ENCODE measurements at regions of chr9 and their contacts with region 1.

Region 1: DNA sequence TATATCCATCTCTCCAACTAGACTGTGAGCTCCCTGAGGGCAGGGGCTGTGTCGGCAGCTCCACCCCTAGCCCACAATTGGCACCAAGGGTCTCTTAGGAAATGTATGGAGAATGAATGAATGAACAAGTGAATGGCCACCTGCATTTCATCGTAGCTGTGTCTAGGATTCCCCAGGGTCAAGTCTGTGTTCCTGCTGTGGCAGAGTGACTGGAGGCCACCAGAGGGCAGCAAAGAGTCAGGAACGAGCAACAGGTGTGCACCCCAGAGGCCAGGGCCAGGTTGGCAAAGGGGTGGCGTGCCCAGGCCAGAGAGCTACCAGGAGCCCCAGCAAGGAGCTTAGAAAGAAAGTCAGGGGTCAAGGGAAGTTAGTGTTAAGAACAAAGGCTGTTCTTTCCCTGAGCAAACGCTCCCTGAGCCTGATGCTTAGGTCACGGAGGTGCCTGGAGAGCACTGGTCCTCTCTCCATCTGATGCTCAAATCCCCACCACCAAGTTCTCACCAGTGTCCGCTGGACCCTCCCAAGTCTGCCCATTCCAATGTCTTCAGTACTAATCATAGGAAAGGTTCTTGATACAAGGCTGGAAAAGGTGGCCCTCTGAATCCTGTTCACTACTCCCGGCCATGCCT is 160.7 kb downstream of the PAX5 start:
- DNase-seq: peak; percentile 73 to 83
- ATAC-seq: peak; percentile 81 to 97
- H3K4me3 ChIP-seq: no peak overlapping the region
- H3K27ac ChIP-seq: no peak overlapping the region
- H3K4me1 ChIP-seq: no peaks in the 10 kb centered on the region
- CTCF ChIP-seq: peak; percentile 90
- EP300 ChIP-seq: no peak
- POLR2A ChIP-seq: no peak
- RAD21 ChIP-seq: peak; percentile 97 to 98

Region 2: DNA sequence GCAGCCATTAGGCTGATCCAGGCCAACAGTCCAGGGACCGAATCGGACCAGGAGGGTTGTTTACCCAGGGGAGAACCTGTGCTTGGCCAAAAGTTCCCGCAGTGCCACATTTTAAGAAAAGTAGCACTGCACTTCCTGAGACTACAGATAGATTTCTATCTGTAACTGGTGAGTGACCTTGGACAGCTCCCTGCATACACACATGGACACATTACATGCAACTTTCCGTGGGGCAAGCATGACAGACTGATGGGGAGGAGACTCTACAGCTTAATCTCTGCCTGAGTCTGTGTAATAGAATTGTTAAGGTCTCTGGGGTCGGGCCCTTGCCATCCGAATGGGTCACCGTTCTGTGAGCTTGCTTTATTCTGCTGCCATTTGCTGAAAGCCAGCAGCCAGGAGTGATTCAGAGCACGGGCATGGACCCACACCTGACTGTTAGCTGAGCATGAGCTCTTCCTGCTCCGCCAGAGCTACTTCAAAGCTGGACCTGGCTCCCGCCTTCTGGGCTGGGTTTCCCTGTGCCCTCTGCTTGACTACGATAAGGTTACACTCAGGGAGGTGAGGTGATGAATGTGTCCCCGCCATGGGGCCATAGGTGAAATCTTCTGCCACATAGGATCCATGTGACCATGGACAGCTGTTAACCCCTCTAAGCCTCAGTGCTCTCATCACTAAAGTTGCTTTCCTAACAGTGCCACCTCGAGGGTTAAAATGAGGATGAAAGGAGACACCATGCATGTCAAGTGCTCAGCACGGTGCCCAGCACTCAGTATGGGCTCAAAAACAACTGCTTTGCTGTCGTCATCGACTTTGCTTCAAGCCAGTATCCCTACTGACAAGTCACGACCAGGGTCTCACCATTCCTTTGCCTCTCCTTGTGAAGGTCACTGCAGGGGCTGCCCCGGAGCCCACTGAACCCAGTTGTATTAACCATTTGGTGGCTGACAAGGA is 100.6 kb before region 1 on chr9:
- CTCF ChIA-PET with region 1: no interaction called
- POLR2A ChIA-PET with region 1: no interaction called
- DNase-seq: no peak
- ATAC-seq: peak; percentile 46 to 66; a peak in 5 of 6 replicates
- H3K4me3 ChIP-seq: no peak overlapping the region
- H3K27ac ChIP-seq: no peak overlapping the region
- H3K4me1 ChIP-seq: no peaks in the 10 kb centered on the region
- CTCF ChIP-seq: no peak
- EP300 ChIP-seq: no peak
- POLR2A ChIP-seq: no peak
- RAD21 ChIP-seq: no peak

Region 3: DNA sequence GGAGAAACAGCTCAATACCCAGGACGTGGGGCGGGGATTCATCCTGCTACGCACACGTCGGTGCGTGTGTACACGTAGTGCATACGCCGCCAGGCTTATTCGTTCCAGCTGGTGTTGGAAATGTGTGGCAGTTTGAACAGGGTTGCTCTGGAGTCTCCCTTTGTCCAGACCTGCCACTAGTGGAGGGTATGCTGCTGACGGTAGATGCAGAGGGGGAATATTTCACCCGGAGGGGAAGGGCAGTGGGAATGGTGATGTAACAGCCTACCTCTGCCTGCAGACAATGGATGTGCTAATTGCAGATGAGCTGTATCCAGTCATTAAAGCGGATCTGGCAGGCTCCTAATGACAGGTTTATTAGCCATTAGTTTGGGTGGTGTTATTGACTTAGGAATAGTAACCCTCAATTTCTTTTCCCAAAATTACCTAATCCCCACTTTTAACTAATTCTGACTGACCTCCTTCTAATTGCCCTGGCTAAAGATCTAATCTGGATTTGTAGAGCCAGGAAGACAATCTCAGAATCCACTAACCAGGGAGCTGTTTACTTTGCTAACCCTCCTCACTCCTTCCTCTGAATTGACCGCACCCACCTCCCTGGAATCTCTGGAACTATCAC is 18.1 kb after region 1 on chr9:
- CTCF ChIA-PET with region 1: interaction called, 62 read pairs
- POLR2A ChIA-PET with region 1: no interaction called
- DNase-seq: no peak
- ATAC-seq: no peak; a peak in 1 of 6 replicates
- H3K4me3 ChIP-seq: no peak overlapping the region
- H3K27ac ChIP-seq: no peak overlapping the region
- H3K4me1 ChIP-seq: peaks cover 6% of the 10 kb centered on the region; the same call in 1 of the 3 replicates
- CTCF ChIP-seq: no peak
- EP300 ChIP-seq: no peak
- POLR2A ChIP-seq: no peak
- RAD21 ChIP-seq: no peak

Region 4: DNA sequence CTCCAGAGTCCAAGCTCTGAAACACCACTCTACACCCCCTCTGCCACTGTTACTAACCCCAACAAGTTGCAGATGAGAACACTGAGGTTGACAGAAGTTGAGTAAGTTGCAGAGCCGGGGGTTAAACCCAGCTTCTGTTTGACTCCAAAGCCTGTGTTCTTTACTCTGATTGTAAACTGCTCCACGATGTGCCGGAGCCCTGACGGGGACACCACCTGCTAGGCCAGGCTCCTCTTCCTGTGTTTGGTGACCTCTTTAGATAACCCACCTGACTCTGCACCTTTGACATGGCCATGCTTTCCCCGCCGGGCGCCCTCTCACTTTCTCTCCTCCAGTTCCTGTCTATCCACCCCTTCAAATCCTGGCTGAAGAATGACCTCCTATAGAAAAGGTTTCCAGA is 64.0 kb after region 1 on chr9:
- CTCF ChIA-PET with region 1: interaction called, 11 read pairs
- POLR2A ChIA-PET with region 1: no interaction called
- DNase-seq: no peak
- ATAC-seq: no peak
- H3K4me3 ChIP-seq: no peak overlapping the region
- H3K27ac ChIP-seq: no peak overlapping the region
- H3K4me1 ChIP-seq: peaks cover 11% of the 10 kb centered on the region
- CTCF ChIP-seq: no peak
- EP300 ChIP-seq: no peak
- POLR2A ChIP-seq: no peak
- RAD21 ChIP-seq: no peak

Region 5: GRCh38 chr9:36974731-36975130 is 101.4 kb after region 1 on chr9:
- CTCF ChIA-PET with region 1: interaction called, 166 read pairs
- POLR2A ChIA-PET with region 1: no interaction called
- DNase-seq: peak in 1 of 2 experiments; percentile 27
- ATAC-seq: peak; percentile 75 to 83; a peak in 5 of 6 replicates
- H3K4me3 ChIP-seq: no peak overlapping the region
- H3K27ac ChIP-seq: no peak overlapping the region
- H3K4me1 ChIP-seq: peaks cover 14% of the 10 kb centered on the region; the same call in 2 of the 3 replicates
- CTCF ChIP-seq: peak; percentile 41; the same call in 2 of the 3 replicates
- EP300 ChIP-seq: no peak
- POLR2A ChIP-seq: no peak
- RAD21 ChIP-seq: peak; percentile 59 to 62

Region 6: DNA sequence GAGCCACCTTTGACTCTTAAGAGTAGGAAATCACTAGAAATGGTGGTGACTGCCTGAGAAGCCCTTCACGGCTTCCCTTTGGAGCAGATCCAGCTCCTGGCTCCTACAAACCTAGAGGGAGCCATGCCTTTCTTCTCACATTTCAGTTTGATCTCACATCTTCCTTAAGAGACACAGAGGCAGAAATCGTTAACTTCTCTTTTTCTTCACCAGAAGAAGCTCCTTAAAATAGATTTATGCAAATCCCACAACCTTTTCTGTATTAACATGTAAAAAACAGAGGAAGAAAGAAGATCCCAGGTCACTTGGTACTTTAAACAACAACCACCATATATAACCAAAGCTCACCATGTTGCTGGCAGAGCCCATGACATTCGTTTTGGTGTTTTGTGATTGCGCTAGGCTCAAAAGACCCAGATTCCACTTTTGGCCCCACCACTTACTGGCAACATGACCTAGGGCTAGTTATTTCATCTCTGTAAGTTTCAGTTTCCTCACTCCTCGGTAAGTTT is 131.1 kb after region 1 on chr9:
- CTCF ChIA-PET with region 1: interaction called, 23 read pairs
- POLR2A ChIA-PET with region 1: no interaction called
- DNase-seq: no peak
- ATAC-seq: no peak
- H3K4me3 ChIP-seq: no peak overlapping the region
- H3K27ac ChIP-seq: no peak overlapping the region
- H3K4me1 ChIP-seq: no peaks in the 10 kb centered on the region
- CTCF ChIP-seq: no peak
- EP300 ChIP-seq: no peak
- POLR2A ChIP-seq: no peak
- RAD21 ChIP-seq: no peak

Region 7: DNA sequence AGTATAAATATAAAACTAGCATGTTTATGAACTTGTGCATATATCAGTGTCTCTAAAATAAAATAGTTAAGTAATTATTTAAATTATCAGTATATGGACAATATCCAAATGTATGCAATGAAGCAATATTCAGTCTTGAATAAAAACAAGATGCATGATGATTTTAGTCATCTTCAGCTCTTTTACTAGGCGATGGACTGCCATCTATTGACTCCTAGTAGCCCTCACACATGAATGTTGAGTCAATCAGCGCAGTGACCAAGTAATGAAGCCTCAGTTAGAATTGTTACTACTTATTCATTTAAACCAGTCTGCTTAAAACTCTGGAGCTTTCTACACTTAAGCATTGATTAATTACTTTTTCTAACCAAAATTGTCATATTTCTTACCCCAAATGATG is 456.2 kb after region 1 on chr9:
- CTCF ChIA-PET with region 1: interaction called, 30 read pairs
- POLR2A ChIA-PET with region 1: no interaction called
- DNase-seq: peak; percentile 17 to 68
- ATAC-seq: peak; percentile 64 to 66; a peak in 3 of 6 replicates
- H3K4me3 ChIP-seq: no peak overlapping the region
- H3K27ac ChIP-seq: no peak overlapping the region
- H3K4me1 ChIP-seq: peaks cover 17% of the 10 kb centered on the region; the same call in 2 of the 3 replicates
- CTCF ChIP-seq: peak; percentile 75
- EP300 ChIP-seq: no peak
- POLR2A ChIP-seq: no peak
- RAD21 ChIP-seq: peak; percentile 83